AG04449 (cell line): ENCODE measurements at regions of chr1 and their contacts with region 1.

Region 1: DNA sequence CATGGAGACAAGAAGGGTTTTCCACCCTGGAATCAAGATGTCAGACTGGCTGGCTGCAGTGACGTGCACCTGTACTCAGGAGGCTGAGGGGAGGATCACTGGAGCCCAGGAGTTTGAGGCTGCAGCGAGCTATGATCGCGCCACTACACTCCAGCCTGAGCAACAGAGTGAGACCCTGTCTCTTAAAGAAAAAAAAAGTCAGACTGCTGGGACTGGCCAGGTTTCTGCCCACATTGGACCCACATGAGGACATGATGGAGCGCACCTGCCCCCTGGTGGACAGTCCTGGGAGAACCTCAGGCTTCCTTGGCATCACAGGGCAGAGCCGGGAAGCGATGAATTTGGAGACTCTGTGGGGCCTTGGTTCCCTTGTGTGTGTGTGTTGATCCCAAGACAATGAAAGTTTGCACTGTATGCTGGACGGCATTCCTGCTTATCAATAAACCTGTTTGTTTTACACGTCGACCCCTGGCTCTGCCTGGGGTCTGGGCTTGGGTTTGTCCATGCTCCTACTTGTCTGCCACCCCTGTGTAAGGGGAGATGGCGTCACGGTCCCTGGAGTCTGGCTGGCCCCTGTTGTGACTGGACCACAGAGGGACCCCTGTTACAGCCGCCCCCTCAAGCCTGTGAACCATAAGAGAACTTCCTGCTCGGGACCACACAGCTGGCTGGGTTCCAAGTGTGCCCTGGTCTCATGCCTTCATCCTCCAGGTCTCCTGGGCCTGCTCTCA is 20.9 kb upstream of the VPS13D start:
- DNase-seq: no peak
- H3K4me3 ChIP-seq: no peak overlapping the region
- CTCF ChIP-seq: peak; percentile 91

Region 2: DNA sequence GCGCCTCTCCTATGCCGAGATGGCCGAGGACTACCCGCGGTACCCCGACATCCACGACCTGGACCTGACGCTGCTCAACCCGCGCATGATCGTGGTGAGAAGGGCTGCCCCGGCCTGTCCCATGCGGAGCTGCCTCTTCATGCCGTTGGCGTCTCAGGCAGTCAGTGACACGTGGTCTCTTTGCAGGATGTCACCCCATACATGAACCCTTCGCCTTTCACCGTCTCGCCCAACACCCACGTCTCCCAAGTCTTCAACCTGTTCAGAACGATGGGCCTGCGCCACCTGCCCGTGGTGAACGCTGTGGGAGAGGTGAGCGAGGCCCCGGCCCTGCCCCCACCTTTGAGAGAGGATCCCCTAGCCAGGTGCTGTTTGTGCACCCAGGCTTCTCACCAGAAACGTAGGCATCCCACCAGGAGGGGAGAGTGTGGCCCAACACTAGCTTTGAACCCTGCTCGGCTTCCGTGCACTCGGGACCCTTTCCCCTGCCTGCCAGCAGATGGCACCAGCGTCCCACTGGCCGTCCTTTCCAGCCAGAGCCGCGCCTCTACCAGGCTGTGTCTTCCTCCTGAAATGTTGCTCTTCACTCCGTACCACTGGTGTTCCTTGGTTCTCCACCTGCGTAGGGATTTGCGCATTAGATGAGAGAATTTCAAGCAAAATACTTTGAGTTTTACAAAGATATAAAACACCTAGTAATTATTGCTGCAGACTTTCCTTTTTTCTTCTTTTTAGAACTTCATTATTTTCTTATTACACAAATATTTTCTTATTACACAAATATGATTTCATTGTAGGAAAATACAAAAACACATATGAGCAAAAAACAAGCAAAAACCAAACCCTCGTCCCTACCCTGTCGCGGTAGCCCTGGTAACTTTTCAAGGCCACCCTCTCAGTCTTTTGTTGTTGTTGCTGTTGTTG is 370.3 kb before region 1 on chr1:
- CTCF ChIA-PET with region 1: no interaction called
- POLR2A ChIA-PET with region 1: no interaction called
- DNase-seq: no peak
- H3K4me3 ChIP-seq: no peak overlapping the region
- CTCF ChIP-seq: peak; percentile 99

Region 3: GRCh38 chr1:12107736-12108135 is 101.2 kb before region 1 on chr1:
- CTCF ChIA-PET with region 1: interaction called, 730 read pairs
- POLR2A ChIA-PET with region 1: no interaction called
- DNase-seq: no peak
- H3K4me3 ChIP-seq: no peak overlapping the region
- CTCF ChIP-seq: no peak

Region 4: DNA sequence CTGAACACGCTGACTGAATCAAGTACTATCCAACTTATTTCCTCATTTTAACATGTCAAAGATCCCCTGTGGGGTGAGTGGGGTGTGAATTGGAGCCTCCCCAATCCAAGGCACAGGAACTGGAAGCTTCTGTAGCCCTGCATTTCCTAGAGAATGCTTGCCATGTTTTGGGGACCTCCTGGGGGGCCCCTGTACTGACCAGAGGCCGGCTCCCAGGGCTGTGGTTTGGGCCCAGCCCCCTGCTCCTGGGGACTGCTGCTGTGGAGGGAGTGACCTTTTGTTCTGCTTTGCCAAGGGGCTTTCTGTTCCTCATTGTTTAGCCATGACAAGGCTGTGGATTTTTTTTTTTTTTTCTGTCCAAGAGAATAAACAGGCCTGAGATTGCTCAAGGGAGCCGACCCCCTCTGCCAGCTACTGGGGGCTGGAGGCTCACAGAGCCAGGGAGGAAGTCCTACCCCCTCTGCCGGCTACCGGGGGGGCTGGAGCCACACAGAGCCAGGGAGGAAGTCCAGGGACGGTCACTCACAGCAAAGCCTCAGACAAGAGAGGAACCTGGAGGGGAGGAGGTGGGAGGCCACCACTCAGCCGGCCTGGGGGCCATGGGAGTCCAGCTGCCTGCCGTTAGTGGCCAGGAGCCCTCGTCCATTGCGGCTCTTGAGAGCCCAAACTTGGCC is 24.8 kb before region 1 on chr1:
- CTCF ChIA-PET with region 1: interaction called, 18 read pairs
- POLR2A ChIA-PET with region 1: no interaction called
- DNase-seq: peak; percentile 23
- H3K4me3 ChIP-seq: no peak overlapping the region
- CTCF ChIP-seq: peak; percentile 33

Region 5: DNA sequence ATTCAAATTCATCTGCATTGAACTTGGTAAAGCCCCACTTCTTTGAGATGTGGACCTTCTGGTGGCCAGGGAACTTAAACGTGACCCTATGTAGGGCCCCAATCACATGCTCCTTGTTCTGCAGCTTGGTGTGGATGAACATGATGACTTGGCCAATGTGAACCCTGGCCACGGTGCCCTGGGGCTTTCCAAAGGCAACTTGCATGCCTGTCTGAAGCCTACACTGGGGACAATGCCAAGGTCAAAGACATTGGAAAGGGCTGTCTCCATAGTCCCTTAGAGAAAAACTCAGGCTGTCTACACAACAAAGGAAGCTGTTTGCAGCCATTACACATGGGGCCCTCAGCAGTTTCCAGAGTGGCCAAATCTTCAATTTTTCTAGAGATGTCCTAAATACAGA is 12.0 kb after region 1 on chr1:
- CTCF ChIA-PET with region 1: interaction called, 27 read pairs
- POLR2A ChIA-PET with region 1: no interaction called
- DNase-seq: no peak
- H3K4me3 ChIP-seq: no peak overlapping the region
- CTCF ChIP-seq: no peak

Region 6: DNA sequence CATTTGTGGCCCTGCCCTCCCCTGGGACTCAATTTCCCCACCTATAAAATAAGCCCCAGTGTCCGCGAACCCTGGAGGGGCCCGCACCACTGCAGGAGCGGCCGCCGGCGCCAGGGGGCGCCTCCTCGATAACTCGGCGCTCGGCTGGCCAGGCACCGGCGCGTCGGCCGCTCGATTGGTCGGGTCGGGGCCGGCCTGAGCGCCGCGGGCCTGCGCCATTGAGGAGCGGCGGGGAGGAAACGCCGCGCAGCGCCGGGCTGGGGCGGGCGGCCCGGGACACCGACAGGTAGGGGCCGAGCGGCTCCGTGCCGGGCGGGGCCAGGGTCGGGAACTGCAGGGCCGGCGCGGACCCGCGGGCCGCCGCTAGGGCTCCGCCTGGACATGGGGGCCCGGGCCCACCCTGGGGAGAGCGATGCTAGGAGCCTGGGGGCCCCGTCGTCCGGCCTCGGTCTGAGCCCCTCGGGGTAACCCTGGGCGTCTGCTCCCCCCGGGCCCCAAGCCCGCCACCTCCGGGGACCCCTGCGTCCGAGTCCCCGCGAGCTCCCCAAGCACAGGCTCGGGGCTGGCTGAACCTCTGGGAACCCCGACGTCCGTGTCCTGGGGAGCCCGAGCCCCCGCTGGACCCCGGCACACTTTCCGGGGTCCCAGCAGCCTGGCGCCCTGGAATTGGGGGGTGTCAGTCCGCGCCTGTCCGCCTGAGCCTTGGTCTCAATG is 21.1 kb after region 1 on chr1 and contains the start of gene VPS13D:
- CTCF ChIA-PET with region 1: interaction called, 27 read pairs
- POLR2A ChIA-PET with region 1: no interaction called
- DNase-seq: no peak
- H3K4me3 ChIP-seq: peak within 1 kb of the TSS; percentile 81
- CTCF ChIP-seq: peak; percentile 87

Region 7: DNA sequence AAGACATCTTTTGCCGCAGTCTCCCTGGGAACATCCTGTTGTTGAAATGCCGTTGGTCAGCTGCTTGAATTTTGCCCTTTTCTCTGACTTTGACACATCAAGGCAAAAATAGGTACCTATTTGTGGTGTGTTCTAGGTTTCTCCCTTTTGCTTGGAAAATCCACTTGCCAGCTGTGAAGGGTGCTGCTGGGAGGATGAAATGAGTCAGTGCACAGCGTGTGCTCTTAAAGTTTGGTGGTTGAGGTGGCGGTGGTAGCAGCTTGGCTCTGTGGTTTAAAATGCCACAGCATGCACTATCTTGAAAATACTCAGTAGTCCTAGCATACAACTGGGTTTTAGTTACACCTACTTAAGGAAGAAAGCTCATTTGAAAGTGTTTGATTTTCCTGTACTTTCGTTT is 225.2 kb after region 1 on chr1:
- CTCF ChIA-PET with region 1: no interaction called
- POLR2A ChIA-PET with region 1: no interaction called
- DNase-seq: no peak
- H3K4me3 ChIP-seq: no peak overlapping the region
- CTCF ChIP-seq: no peak